ENCODE measurements at regions of chr1 and their contacts with region 1.

Region 1: GRCh38 chr1:178871551-178872320 is 859 bp upstream of the ANGPTL1 start:
- DNase-seq: no peak
- ATAC-seq: no peak
- H3K4me3 ChIP-seq: no peak overlapping the region
- H3K4me3 Mint-ChIP-seq: no peak overlapping the region
- H3K27ac ChIP-seq: no peak overlapping the region
- H3K27ac Mint-ChIP-seq: no peak overlapping the region
- H3K4me1 ChIP-seq: no peaks in the 10 kb centered on the region
- H3K4me1 Mint-ChIP-seq: peaks cover 0 to 7% (median 0%) of the 10 kb centered on the region in 7 donors
- H3K27me3 ChIP-seq: no peaks in the 10 kb centered on the region
- H3K27me3 Mint-ChIP-seq: no peaks in the 10 kb centered on the region

Region 2: DNA sequence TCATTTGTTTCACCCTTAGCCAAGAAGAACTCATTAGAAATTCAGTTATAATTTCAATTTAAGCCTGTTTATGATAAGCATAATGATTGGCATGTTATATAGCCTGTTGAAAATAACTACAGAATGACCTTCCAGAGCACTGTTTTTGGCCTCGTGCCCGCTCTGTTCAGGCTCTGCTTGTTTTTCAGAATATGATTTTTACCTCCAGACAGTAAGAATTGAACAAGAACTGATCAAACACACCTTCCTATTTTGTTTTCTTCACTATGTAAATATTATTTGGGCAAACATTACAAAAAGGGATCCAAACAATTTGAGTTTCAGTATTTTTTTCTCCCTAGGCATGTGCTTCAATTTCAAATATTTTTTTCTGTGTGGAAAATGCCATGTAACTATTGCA is 47.2 kb after region 1 on chr1:
- CTCF ChIA-PET with region 1: no interaction called
- POLR2A ChIA-PET with region 1: no interaction called
- intact Hi-C with region 1: loop called in 1 of 2 experiments (anchors 2 kb)
- DNase-seq: no peak
- ATAC-seq: no peak
- H3K4me3 ChIP-seq: no peak overlapping the region
- H3K4me3 Mint-ChIP-seq: no peak overlapping the region
- H3K27ac ChIP-seq: no peak overlapping the region
- H3K27ac Mint-ChIP-seq: no peak overlapping the region
- H3K4me1 ChIP-seq: no peaks in the 10 kb centered on the region
- H3K4me1 Mint-ChIP-seq: no peaks in the 10 kb centered on the region
- H3K27me3 ChIP-seq: no peaks in the 10 kb centered on the region
- H3K27me3 Mint-ChIP-seq: peaks cover 0 to 5% (median 0%) of the 10 kb centered on the region in 5 donors

Measured in naive thymus-derived CD4-positive, alpha-beta T cell (primary cell).